AG04449 (cell line): ENCODE measurements at regions of chr10 and their contacts with region 1.

Region 1: GRCh38 chr10:73997787-73998622 is at the start of gene VCL:
- DNase-seq: peak; percentile 82
- H3K4me3 ChIP-seq: peak within 1 kb of the TSS; percentile 99
- CTCF ChIP-seq: no peak

Region 2: DNA sequence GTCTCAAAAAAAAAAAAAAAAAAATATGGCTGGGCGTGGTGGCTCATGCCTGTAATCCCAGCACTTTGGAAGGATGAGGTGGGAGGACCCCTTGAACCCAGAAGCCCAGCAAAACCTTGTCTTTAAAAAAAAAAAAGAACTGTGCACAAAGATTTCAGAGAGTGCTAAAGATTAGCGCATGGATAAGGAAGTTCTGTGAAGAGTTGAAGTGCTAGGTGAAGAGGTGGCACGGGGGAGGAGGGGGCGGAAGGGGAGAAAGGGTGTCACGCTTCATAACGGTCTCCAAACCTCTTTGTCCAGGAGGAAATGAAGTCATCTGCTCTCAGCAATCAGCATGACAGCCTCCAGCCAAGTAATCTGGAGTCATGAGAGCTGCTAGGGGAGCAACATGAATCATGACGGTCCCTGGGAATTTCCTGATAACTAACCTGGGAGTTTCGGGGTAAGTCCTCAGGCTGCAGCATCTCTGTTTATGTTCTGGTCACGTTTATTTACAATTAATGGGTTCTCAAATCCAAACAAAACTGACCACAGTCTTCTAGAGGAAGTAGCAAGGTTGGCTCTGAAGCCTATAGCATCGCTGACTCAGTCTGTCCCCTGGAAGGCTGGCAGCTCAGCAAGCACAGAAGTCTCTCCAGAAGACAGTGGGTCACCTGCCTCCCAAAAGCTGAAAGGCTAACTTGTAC is 89.0 kb before region 1 on chr10:
- CTCF ChIA-PET with region 1: no interaction called
- POLR2A ChIA-PET with region 1: interaction called, 10 read pairs
- DNase-seq: peak; percentile 85
- H3K4me3 ChIP-seq: peak overlapping the region; percentile 7; the same call in 1 of the 2 replicates
- CTCF ChIP-seq: no peak

Region 3: DNA sequence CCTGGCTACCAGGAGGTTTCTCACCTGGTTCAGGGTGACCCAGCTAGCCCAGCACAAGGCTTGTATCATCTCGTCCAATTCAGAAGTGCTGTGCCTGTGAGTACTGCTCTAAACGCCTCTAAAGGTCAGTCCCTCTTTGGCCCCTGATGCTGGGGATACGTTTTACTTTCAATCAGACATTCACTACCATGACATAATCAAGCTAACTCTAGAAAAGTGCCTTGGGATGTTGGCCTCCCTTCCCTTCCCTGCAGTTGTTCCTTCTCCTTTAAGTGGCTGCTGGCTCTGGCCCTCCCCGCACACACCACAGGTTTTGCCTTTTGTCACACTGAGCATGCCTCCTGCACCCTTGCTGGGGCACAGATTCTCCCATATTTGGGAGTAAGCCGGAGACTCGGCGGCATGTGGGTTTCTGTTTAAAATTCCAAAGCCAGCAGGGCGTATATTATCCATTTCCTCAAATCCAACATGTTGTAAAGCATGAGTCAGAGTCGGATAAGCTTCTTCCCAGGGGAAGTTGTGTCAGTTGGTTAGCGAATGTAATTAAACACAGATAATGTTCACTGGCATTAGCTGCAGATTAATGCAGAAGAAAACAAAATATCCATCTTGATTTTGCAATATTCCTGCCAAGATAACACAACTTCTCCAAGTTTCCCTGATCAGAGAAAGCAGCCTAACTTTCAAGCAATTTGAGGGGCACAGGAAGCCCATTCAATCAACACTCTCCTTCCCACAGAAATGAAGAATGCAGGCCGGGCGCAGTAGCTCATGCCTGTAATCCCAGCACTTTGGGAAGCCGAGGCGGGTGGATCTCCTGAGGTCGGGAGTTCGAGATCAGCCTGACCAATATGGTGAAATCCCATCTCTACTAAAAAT is 31.9 kb before region 1 on chr10:
- CTCF ChIA-PET with region 1: interaction called, 3 read pairs
- POLR2A ChIA-PET with region 1: interaction called, 10 read pairs
- DNase-seq: peak; percentile 98
- H3K4me3 ChIP-seq: peak overlapping the region; percentile 12
- CTCF ChIP-seq: no peak

Region 4: DNA sequence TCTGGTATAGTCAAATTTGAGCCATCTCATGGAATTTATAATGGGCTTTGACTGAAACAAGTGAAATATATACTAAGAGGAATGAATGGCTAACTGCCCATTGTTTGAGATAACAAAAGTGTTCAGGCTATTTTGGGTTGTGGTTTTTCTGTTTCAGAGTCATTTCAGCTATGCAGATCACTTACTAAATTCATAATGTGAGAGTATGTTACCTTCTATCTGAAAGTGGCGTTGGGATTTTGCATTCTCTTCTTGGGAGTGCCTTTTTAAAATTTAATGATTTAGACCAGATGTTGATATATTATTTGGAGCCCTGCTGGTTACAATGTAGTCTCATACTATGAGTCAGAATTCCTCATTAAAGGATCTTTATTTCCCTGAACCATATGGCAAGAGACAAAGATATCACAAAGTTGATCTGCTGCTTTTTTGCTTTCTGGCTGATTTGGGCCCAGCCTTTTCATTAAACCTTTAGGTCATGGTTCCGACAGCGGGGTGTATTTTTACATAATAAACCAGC is 10.3 kb after region 1 on chr10:
- CTCF ChIA-PET with region 1: interaction called, 7 read pairs
- POLR2A ChIA-PET with region 1: interaction called, 16 read pairs
- DNase-seq: peak; percentile 74
- H3K4me3 ChIP-seq: no peak overlapping the region; the same call in 1 of the 2 replicates
- CTCF ChIP-seq: no peak

Region 5: GRCh38 chr10:74021248-74022055 is 23.4 kb after region 1 on chr10:
- CTCF ChIA-PET with region 1: interaction called, 9 read pairs
- POLR2A ChIA-PET with region 1: interaction called, 10 read pairs
- DNase-seq: no peak
- H3K4me3 ChIP-seq: no peak overlapping the region
- CTCF ChIP-seq: no peak

Region 6: DNA sequence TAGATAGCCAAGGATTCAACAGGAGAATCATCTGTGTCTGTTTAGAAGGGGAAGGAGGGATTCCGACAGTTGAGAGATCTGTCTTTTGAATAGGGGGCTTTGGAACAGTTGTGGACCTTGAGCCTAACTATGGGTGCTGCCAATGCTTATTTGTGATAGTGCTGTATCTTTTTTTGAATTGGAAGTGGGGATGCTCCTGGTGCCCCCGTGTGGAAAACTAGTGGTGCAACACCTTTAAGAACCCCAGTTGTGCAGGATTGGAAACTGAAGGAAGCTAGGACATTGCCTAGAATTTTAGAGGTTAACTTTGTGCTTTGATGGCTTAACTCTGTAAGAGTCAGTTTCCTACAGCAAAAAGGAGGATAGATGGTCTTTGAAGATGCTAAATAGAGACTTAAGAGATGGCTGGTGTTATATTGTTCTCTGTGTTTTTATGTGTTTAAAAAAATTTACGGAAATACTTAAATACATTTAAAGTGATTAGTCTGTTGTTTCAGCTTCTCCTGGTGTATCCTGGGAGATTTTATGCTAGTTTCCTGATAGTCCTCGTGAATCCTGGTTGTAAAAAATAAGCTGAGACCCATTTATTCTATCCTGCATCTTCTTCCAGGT is 83.3 kb after region 1 on chr10:
- CTCF ChIA-PET with region 1: interaction called, 26 read pairs
- POLR2A ChIA-PET with region 1: interaction called, 6 read pairs
- DNase-seq: no peak
- H3K4me3 ChIP-seq: no peak overlapping the region
- CTCF ChIP-seq: peak; percentile 71